ENCODE measurements at regions of chr19 and their contacts with region 1.

Region 1: DNA sequence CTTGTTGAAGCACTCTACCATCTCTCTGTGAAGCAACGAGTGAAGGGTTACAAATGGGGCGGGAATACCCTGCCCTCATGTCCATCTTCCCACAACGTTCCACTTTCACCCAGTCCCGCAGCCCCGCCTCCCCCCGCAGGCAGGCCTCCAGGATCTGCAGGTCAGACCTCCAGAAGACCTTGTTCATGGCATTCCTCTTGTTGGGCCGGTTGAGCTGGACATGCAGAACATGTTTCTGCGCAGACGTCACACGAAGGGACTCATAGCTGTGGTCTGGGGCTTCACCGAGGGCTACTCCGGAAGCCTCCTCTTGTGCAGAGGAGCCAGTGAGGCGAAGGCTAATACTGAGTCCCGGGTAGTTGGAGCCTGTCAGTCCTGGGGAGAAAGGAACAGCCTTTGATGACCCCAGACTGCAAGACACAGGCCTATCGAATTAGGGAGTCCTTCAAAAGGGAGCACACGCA is 420 bp downstream of the ECH1 start:
- DNase-seq: peak; percentile 64
- H3K4me3 ChIP-seq: peak overlapping the region; percentile 3 to 78 (median 67)
- H3K27ac ChIP-seq: peak overlapping the region; percentile 78
- H3K4me1 ChIP-seq: peaks cover 13% of the 10 kb centered on the region
- H3K27me3 ChIP-seq: no peaks in the 10 kb centered on the region
- CTCF ChIP-seq: no peak
- POLR2A ChIP-seq: no peak

Region 2: DNA sequence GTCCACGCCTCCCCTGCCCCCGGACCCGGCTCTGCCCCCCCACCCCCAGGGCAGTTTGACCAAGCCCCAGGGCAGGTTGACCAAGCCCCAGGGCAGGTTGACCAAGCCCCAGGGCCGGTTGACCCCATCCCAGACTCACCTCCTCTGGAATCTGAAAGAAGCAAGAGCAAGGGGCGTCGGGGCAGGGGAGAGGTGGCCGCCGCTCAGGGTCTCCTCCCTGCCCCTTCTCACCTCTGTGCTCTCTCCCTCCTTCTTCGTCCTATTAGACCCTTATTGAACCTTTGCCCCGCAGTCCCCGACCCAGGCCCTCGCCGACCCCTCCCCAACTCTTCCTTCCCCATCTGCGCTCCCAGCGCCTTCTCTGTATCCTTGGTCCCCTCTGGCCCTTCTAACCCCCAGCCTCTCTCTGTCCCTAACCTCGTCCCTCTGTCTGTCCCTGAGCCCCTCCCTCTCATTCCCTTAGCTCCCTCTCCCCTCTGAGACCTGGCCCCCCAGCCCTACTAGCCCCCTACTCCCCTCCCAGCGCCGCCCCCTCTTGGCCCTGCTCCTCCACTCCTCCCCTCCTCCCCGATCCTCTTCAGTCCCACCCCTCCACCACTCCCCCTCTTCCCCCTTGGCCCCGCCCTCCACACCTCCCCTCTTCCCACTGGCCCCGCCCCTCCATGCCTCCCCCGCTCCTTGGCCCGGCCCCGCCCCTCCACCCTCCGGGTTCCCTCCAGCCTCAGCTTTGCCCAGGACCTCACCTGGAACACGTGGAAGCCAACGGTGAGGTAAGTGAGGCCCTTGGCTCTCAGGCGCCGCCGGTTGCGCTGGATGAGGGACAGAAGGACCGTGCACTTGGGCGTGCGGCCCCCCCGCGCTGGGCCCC is 94.5 kb before region 1 on chr19:
- CTCF ChIA-PET with region 1: interaction called, 3 read pairs
- POLR2A ChIA-PET with region 1: no interaction called
- dilution Hi-C with region 1: no loop called
- intact Hi-C with region 1: loop called (anchors 5 kb)
- DNase-seq: no peak
- H3K4me3 ChIP-seq: peak overlapping the region in 1 of 3 experiments; percentile 37
- H3K27ac ChIP-seq: no peak overlapping the region
- H3K4me1 ChIP-seq: peaks cover 17% of the 10 kb centered on the region
- H3K27me3 ChIP-seq: no peaks in the 10 kb centered on the region
- CTCF ChIP-seq: no peak
- POLR2A ChIP-seq: no peak

Region 3: GRCh38 chr19:38769635-38770211 is 61.5 kb before region 1 on chr19:
- CTCF ChIA-PET with region 1: interaction called, 24 read pairs
- POLR2A ChIA-PET with region 1: no interaction called
- dilution Hi-C with region 1: no loop called
- intact Hi-C with region 1: loop called (anchors 5 kb)
- DNase-seq: peak; percentile 70
- H3K4me3 ChIP-seq: peak overlapping the region in 1 of 3 experiments; percentile 18
- H3K27ac ChIP-seq: no peak overlapping the region
- H3K4me1 ChIP-seq: peaks cover 4% of the 10 kb centered on the region
- H3K27me3 ChIP-seq: no peaks in the 10 kb centered on the region
- CTCF ChIP-seq: peak; percentile 79 to 84
- POLR2A ChIP-seq: no peak

Region 4: DNA sequence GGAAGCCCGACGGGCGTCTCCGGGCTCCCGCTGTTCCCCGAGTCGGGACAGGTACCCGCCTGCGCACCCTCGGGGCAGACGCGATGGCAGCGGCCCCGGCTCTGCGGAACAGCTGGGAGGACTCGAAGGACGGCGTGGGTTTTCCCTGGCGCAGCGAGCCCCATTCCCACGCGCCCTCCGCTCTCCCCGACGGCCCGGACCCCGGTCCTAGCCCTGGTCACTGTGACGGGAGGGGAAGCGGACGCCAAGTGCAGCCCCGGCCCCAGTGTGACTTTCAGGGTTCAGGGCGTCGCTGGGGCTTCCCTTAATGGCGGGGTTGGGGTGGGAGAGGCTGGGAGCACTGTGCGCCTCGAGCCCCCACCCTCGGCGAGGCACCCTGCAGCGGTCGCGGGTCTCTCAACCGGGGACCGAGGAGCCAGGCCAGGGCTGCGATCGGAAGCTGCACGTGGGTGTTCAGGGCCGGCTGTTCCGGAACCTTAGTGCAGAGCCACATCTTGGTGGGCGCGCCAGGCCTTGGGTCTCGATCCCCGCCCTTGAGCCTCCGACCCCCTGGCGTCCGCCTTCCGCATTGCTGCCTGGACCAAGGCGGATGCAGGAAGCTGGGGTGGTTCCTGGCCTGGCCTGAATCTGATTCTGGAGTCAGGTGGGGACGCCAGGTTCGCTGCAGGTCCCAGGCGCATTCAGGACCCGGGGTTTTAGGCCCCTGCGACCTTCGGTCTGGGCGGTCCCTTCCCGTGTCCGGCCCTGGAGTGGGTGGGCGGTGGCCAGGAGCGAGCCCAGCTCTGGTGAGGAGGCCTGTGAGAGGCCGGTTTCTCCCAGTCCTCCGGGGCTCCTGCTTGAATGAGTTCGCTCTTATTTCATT is 38.7 kb before region 1 on chr19:
- CTCF ChIA-PET with region 1: interaction called, 3 read pairs
- POLR2A ChIA-PET with region 1: no interaction called
- dilution Hi-C with region 1: no loop called
- intact Hi-C with region 1: loop called (anchors 5 kb)
- DNase-seq: no peak
- H3K4me3 ChIP-seq: no peak overlapping the region
- H3K27ac ChIP-seq: no peak overlapping the region
- H3K4me1 ChIP-seq: peaks cover 9% of the 10 kb centered on the region
- H3K27me3 ChIP-seq: no peaks in the 10 kb centered on the region
- CTCF ChIP-seq: peak; percentile 26 to 32
- POLR2A ChIP-seq: no peak

Region 5: GRCh38 chr19:38869856-38870607 is 38.9 kb after region 1 on chr19:
- CTCF ChIA-PET with region 1: interaction called, 5 read pairs
- POLR2A ChIA-PET with region 1: no interaction called
- dilution Hi-C with region 1: no loop called
- intact Hi-C with region 1: loop called (anchors 1 kb)
- DNase-seq: peak; percentile 61
- H3K4me3 ChIP-seq: peak overlapping the region; percentile 3 to 40 (median 33)
- H3K27ac ChIP-seq: no peak overlapping the region
- H3K4me1 ChIP-seq: peaks cover 9% of the 10 kb centered on the region
- H3K27me3 ChIP-seq: no peaks in the 10 kb centered on the region
- CTCF ChIP-seq: peak; percentile 75 to 84
- POLR2A ChIP-seq: no peak

Region 6: DNA sequence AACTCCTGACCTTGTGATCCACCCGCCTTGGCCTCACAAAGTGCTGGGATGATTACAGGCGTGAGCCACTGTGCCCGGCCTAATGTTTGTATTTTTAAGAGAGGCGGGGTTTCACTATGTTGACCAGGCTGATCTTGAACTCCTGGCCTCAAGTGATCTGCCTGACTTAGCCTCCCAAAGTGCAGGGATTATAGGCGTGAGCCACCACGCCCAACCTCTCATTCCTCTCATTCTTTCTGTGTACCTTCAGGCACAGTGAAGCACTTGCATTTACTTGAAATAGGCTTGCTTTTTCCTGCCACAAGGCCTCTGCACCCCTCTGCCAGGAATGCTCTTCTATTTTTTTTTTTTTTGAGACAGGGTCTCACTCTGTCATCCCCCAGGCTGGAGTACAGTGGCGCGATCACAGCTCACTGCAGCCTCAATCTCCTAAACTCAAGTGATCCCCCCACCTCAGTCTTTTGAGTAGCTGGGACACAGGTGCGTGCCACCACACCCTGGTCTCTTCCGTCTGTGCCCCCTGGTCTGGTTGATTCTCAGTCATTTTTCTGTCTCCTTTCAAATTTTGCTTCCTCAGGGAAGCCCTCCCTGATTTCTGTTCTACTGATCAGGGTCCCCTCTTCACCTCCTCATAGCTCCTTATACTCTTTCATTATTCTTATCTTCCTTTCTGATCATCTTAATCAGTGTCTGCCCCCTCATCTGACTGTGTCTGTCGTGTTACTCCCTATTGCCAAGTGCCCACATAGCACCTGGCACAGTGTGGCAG is 1904.0 kb after region 1 on chr19:
- CTCF ChIA-PET with region 1: no interaction called
- POLR2A ChIA-PET with region 1: no interaction called
- dilution Hi-C with region 1: no loop called
- intact Hi-C with region 1: no loop called
- DNase-seq: no peak
- H3K4me3 ChIP-seq: no peak overlapping the region
- H3K27ac ChIP-seq: no peak overlapping the region
- H3K4me1 ChIP-seq: no peaks in the 10 kb centered on the region
- H3K27me3 ChIP-seq: no peaks in the 10 kb centered on the region
- CTCF ChIP-seq: no peak
- POLR2A ChIP-seq: no peak